Thyroid gland (tissue), 4 donors: ENCODE measurements at regions of chr12 and their contacts with region 1.

Region 1: GRCh38 chr12:26097046-26097878 is 27.6 kb downstream of the BHLHE41 start:
- DNase-seq: peak; percentile 71 to 83
- H3K4me3 ChIP-seq: no peak overlapping the region
- H3K27ac ChIP-seq: peak overlapping the region in 2 of 3 donors; percentile 54 to 72
- H3K4me1 ChIP-seq: peaks cover 5 to 17% of the 10 kb centered on the region in 2 donors
- H3K27me3 ChIP-seq: no peaks in the 10 kb centered on the region
- CTCF ChIP-seq: peak; percentile 91 to 95 (median 94)
- POLR2A ChIP-seq: no peak

Region 2: GRCh38 chr12:26402648-26403047 is 305.4 kb after region 1 on chr12:
- intact Hi-C with region 1: loop called (anchors 10 kb)
- DNase-seq: peak; percentile 68 to 73
- H3K4me3 ChIP-seq: no peak overlapping the region
- H3K27ac ChIP-seq: no peak overlapping the region
- H3K4me1 ChIP-seq: no peaks in the 10 kb centered on the region
- H3K27me3 ChIP-seq: no peaks in the 10 kb centered on the region
- CTCF ChIP-seq: peak in 5 of 6 experiments; percentile 27 to 69 (median 64)
- POLR2A ChIP-seq: no peak

Region 3: GRCh38 chr12:26651566-26652188 is 554.4 kb after region 1 on chr12:
- intact Hi-C with region 1: loop called (anchors 10 kb)
- DNase-seq: peak; percentile 44 to 47
- H3K4me3 ChIP-seq: no peak overlapping the region
- H3K27ac ChIP-seq: no peak overlapping the region
- H3K4me1 ChIP-seq: no peaks in the 10 kb centered on the region
- H3K27me3 ChIP-seq: no peaks in the 10 kb centered on the region
- CTCF ChIP-seq: peak; percentile 15 to 83 (median 72)
- POLR2A ChIP-seq: no peak